BJ (cell line): ENCODE measurements at regions of chr1 and their contacts with region 1.

Region 1: GRCh38 chr1:26787706-26788514 is at the start of gene PIGV:
- DNase-seq: no peak
- H3K4me3 ChIP-seq: peak within 1 kb of the TSS; percentile 54
- H3K27me3 ChIP-seq: no peaks in the 10 kb centered on the region
- CTCF ChIP-seq: no peak
- polyA plus RNA-seq, gene PIGV: 25.7 and 28.0 TPM in 2 replicates

Region 2: GRCh38 chr1:26593385-26593784 is 194.5 kb before region 1 on chr1:
- CTCF ChIA-PET with region 1: interaction called, 210 read pairs
- POLR2A ChIA-PET with region 1: no interaction called
- DNase-seq: no peak
- H3K4me3 ChIP-seq: no peak overlapping the region
- H3K27me3 ChIP-seq: no peaks in the 10 kb centered on the region
- CTCF ChIP-seq: no peak

Region 3: DNA sequence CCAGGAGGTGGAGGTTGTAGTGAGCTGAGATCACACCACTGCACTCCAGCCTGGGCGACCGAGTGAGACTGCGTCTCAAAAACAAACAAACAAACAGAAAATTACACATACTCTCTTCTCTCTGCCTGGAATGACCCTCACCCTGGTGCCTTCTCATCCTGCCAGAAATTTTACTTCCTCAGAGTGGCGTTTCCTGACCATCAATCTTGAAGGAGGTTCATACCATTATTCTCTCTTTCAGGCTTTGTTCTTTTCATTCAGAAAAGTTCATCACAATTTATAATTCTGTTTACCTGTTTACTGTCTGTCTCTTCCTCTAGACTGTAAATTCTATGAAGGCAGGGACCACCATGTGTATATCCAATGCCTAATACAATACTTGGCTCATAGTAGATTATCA is 179.0 kb before region 1 on chr1:
- CTCF ChIA-PET with region 1: interaction called, 210 read pairs
- POLR2A ChIA-PET with region 1: no interaction called
- DNase-seq: no peak
- H3K4me3 ChIP-seq: no peak overlapping the region
- H3K27me3 ChIP-seq: 0 out of 2 replicates have a peak, but pooled peaks cover 2% of the 10 kb centered on the region
- CTCF ChIP-seq: no peak

Region 4: GRCh38 chr1:26645734-26646133 is 142.2 kb before region 1 on chr1:
- CTCF ChIA-PET with region 1: no interaction called
- POLR2A ChIA-PET with region 1: no interaction called
- DNase-seq: no peak
- H3K4me3 ChIP-seq: no peak overlapping the region
- H3K27me3 ChIP-seq: peaks cover 3% of the 10 kb centered on the region; the same call in 1 of the 2 replicates
- CTCF ChIP-seq: no peak

Region 5: DNA sequence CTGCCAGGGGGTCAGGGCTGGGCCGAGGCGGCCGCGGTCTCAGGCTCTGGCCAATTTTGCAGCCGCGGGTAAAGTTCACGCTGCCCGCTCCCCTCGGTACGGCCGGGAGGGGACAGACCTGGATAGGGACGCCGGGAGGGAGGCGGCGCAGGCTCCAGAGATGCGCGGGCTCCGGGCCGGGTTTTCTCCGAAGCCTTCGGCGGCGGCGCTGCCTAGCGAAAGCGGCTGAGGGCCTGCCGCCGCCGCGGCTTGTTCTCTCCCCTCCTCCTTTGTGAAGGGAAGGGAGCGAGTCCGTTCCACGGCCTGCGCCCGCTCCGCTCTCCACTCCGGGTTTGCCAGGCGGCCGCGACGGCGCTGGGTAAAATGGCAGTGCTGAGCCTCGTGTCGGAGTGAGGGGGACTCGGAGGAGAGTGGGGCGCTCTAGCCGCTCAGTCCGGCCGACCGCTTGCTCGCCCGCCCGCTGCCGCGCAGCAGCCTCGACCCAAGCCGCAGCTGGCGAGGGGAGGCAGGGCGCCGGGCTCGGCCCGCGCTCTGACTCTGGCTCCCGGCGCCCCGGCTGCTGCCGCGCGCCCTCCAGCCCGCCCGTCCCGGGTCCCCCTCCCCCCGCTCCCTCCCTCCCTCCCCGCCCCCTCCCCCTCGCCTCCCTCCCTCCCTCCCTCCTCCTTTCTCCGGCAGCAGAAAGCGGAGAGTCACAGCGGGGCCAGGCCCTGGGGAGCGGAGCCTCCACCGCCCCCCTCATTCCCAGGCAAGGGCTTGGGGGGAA is 92.4 kb before region 1 on chr1 and contains the start of gene ARID1A:
- CTCF ChIA-PET with region 1: interaction called, 47 read pairs
- POLR2A ChIA-PET with region 1: interaction called, 5 read pairs
- DNase-seq: peak; percentile 74
- H3K4me3 ChIP-seq: peak within 1 kb of the TSS; percentile 67
- H3K27me3 ChIP-seq: no peaks in the 10 kb centered on the region
- CTCF ChIP-seq: peak; percentile 17; the same call in 1 of the 2 replicates
- polyA plus RNA-seq, gene ARID1A: 9.3 and 16.0 TPM in 2 replicates

Region 6: GRCh38 chr1:26799479-26800142 is 11.7 kb after region 1 on chr1:
- CTCF ChIA-PET with region 1: interaction called, 33 read pairs
- POLR2A ChIA-PET with region 1: no interaction called
- DNase-seq: no peak
- H3K4me3 ChIP-seq: no peak overlapping the region
- H3K27me3 ChIP-seq: no peaks in the 10 kb centered on the region
- CTCF ChIP-seq: 0 out of 2 replicates have a peak, but pooled peaks have one; percentile 7

Region 7: GRCh38 chr1:26864610-26865527 is 77.0 kb after region 1 on chr1:
- CTCF ChIA-PET with region 1: interaction called, 12 read pairs
- POLR2A ChIA-PET with region 1: no interaction called
- DNase-seq: peak; percentile 96
- H3K4me3 ChIP-seq: peak overlapping the region; percentile 47
- H3K27me3 ChIP-seq: no peaks in the 10 kb centered on the region
- CTCF ChIP-seq: peak; percentile 27; the same call in 1 of the 2 replicates